B cell (primary cell): ENCODE measurements at regions of chr16 and their contacts with region 1.

Region 1: GRCh38 chr16:30698139-30698815 is 694 bp upstream of the SRCAP start:
- DNase-seq: peak; percentile 99
- ATAC-seq: peak; percentile 75
- H3K4me3 ChIP-seq: peak overlapping the region in 4 of 5 experiments; percentile 95 to 100 (median 97)
- H3K4me3 Mint-ChIP-seq: peak overlapping the region; percentile 95
- H3K27ac ChIP-seq: peak overlapping the region; percentile 100
- H3K27ac Mint-ChIP-seq: peak overlapping the region; percentile 100
- H3K4me1 ChIP-seq: peaks cover 19 to 25% of the 10 kb centered on the region in 2 donors
- H3K4me1 Mint-ChIP-seq: peaks cover 29% of the 10 kb centered on the region
- H3K27me3 ChIP-seq: no peaks in the 10 kb centered on the region
- H3K27me3 Mint-ChIP-seq: no peaks in the 10 kb centered on the region
- CTCF ChIP-seq: no peak

Region 2: DNA sequence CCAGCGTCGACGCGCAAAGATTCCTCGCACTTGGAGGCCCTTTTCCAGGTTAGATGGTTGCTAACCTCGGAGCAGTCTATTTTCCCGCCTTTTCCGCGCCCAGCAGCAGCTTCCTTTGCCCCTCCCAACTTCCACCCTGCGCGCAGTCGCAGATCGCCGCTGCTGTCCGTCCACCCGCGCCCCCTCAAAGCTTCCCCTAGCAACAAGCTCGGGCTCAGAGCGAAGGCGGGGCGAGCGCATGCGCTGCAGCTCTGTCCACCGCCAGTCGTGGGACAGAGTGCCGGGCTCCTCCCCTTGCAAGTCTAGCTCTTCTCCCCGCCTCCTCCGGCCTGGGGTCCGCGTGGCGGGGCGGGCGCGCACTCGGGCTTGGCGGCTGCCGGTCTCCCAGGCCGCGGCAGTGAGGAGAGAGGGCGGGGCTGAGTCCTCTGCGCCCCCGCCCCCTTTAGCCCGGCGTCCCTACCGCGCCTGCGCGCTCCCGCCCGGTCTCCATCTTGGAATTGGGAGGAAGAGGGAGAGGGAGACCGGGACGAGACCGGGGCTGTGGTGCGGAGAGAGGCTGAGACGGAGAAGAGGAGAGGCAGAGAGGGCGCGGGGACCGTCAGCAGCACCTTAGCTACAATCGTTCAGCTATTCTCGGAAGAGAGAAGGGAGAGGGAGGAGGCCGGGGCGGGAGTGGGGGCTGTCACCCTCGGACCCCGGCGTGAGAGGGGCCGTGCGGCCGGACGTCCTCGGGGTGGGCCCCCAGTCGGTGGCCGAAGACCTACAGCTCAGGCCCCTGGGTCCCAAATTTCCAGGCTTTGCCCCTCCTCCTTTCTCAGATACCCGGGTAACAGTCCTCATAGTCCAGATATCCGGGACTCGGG is 724.7 kb before region 1 on chr16 and contains the start of gene TAOK2:
- CTCF ChIA-PET with region 1: no interaction called
- POLR2A ChIA-PET with region 1: no interaction called
- intact Hi-C with region 1: loop called (anchors 5 kb)
- DNase-seq: peak; percentile 98
- ATAC-seq: peak; percentile 99
- H3K4me3 ChIP-seq: peak within 1 kb of the TSS; percentile 79 to 100 (median 99)
- H3K4me3 Mint-ChIP-seq: peak within 1 kb of the TSS; percentile 95
- H3K27ac ChIP-seq: peak within 1 kb of the TSS; percentile 73 to 79
- H3K27ac Mint-ChIP-seq: peak within 1 kb of the TSS; percentile 94
- H3K4me1 ChIP-seq: peaks cover 31 to 38% of the 10 kb centered on the region in 2 donors
- H3K4me1 Mint-ChIP-seq: peaks cover 36% of the 10 kb centered on the region
- H3K27me3 ChIP-seq: no peaks in the 10 kb centered on the region
- H3K27me3 Mint-ChIP-seq: no peaks in the 10 kb centered on the region
- CTCF ChIP-seq: no peak
- total RNA-seq, gene TAOK2: 50.8 and 51.9 TPM in 2 replicates

Region 3: GRCh38 chr16:30417529-30418349 is 280.5 kb before region 1 on chr16:
- CTCF ChIA-PET with region 1: no interaction called
- POLR2A ChIA-PET with region 1: no interaction called
- intact Hi-C with region 1: loop called (anchors 5 kb)
- DNase-seq: peak; percentile 95
- ATAC-seq: peak; percentile 87
- H3K4me3 ChIP-seq: peak overlapping the region; percentile 33 to 75 (median 66)
- H3K4me3 Mint-ChIP-seq: peak overlapping the region; percentile 77
- H3K27ac ChIP-seq: peak overlapping the region; percentile 47 to 73
- H3K27ac Mint-ChIP-seq: peak overlapping the region; percentile 72
- H3K4me1 ChIP-seq: peaks cover 5 to 12% of the 10 kb centered on the region in 2 donors
- H3K4me1 Mint-ChIP-seq: peaks cover 7% of the 10 kb centered on the region
- H3K27me3 ChIP-seq: no peaks in the 10 kb centered on the region
- H3K27me3 Mint-ChIP-seq: no peaks in the 10 kb centered on the region
- CTCF ChIP-seq: peak; percentile 17

Region 4: DNA sequence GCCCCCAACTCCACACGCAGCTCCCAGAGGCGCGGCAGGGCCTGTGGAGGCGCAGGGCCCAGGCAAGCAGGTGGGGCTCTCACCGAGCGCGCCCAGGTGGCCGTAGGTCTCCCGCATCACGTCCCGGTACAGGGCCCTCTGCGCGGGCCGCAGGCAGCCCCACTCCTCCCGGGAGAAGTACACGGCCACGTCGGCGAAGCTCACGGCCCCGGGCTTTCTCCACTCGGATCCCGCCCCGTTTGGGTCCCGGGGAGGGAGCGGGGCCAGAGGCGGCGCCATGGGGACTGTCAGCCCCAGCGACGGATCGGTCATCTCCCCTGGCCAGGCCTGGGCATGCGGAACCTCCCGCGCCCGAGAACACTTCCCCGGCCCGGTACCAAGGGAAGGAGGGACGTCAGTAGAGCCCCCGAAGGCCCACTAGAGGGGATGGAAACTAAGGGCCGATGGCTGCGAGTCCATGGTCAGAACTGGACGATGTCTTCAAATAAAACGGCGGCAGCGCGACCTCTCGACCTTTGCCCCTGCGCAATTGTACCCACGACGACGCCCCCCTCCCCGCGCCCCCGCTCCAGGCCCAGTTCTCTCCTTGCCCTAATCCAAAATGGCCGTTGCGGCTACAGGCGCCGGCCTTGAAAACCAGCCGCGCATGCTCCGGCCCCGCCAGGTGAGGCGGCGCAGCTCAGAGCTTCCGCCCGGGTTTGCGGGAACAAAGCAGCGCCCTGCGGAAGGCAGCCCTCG is 163.7 kb before region 1 on chr16 and contains the start of gene ZNF747:
- CTCF ChIA-PET with region 1: interaction called, 3 read pairs
- POLR2A ChIA-PET with region 1: interaction called, 4 read pairs
- intact Hi-C with region 1: loop called (anchors 1 kb)
- DNase-seq: peak; percentile 93
- ATAC-seq: peak; percentile 82
- H3K4me3 ChIP-seq: peak within 1 kb of the TSS; percentile 80 to 93 (median 88)
- H3K4me3 Mint-ChIP-seq: peak within 1 kb of the TSS; percentile 98
- H3K27ac ChIP-seq: peak within 1 kb of the TSS; percentile 89 to 94
- H3K27ac Mint-ChIP-seq: peak within 1 kb of the TSS; percentile 94
- H3K4me1 ChIP-seq: peaks cover 8 to 23% of the 10 kb centered on the region in 2 donors
- H3K4me1 Mint-ChIP-seq: peaks cover 33% of the 10 kb centered on the region
- H3K27me3 ChIP-seq: no peaks in the 10 kb centered on the region
- H3K27me3 Mint-ChIP-seq: no peaks in the 10 kb centered on the region
- CTCF ChIP-seq: no peak
- total RNA-seq, gene ZNF747: 17.3 and 27.1 TPM in 2 replicates

Region 5: GRCh38 chr16:30650369-30651123 is 47.7 kb before region 1 on chr16 and contains the start of gene PRR14:
- CTCF ChIA-PET with region 1: interaction called, 17 read pairs
- POLR2A ChIA-PET with region 1: interaction called, 8 read pairs
- intact Hi-C with region 1: loop called (anchors 1 kb)
- DNase-seq: peak; percentile 99
- ATAC-seq: peak; percentile 76
- H3K4me3 ChIP-seq: peak within 1 kb of the TSS; percentile 62 to 100 (median 93)
- H3K4me3 Mint-ChIP-seq: peak within 1 kb of the TSS; percentile 91
- H3K27ac ChIP-seq: peak within 1 kb of the TSS; percentile 97 to 98
- H3K27ac Mint-ChIP-seq: peak within 1 kb of the TSS; percentile 96
- H3K4me1 ChIP-seq: peaks cover 9 to 21% of the 10 kb centered on the region in 2 donors
- H3K4me1 Mint-ChIP-seq: peaks cover 19% of the 10 kb centered on the region
- H3K27me3 ChIP-seq: no peaks in the 10 kb centered on the region
- H3K27me3 Mint-ChIP-seq: no peaks in the 10 kb centered on the region
- CTCF ChIP-seq: no peak
- total RNA-seq, gene PRR14: 92.7 and 95.8 TPM in 2 replicates

Region 6: DNA sequence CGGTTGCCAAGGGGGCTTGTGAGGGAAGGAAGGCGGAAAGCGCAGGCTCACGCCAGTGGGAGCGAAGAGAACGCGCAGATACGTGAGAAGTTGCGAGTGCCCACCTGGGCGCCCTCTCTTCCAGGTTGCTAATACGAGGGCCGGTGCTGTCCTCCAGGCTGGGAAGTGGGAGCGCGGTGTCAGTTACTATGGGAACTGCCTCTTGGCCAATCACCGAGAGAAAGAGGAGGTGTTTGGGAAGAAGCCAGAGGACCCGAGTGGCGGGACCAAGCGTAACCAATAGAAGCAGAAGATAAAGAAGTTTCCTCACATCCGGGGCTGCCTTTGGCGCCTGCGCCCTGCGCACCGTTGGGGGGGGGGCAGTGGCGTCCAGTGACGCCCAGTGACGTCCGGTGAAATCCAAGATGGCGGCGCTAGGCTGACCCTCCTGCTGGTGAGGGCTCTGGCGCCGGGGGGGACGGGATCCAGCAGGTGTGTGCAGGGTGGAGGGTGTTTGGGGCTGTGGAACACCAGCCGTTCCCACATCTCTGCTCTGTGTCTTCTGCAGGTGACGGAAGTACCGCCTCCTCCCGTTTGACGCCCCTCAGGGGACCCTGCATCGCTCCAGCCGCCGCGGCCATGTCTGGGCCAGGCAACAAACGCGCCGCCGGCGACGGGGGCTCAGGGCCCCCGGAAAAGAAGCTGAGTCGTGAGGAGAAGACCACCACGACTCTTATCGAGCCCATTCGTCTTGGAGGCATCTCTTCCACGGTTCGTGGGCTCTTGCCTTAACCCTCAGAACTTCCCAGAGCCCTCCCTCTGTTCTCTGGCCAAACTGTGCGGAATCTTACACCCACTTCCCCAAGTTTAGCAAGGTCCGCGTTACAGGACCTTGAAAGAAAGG is 63.9 kb after region 1 on chr16 and contains the starts of genes CFAP119 and RNF40:
- CTCF ChIA-PET with region 1: interaction called, 3 read pairs
- POLR2A ChIA-PET with region 1: interaction called, 10 read pairs
- intact Hi-C with region 1: loop called (anchors 1 kb)
- DNase-seq: peak; percentile 95
- ATAC-seq: peak; percentile 92
- H3K4me3 ChIP-seq: peak within 1 kb of the TSS; percentile 82 to 93 (median 90)
- H3K4me3 Mint-ChIP-seq: peak within 1 kb of the TSS; percentile 98
- H3K27ac ChIP-seq: peak within 1 kb of the TSS; percentile 57 to 91
- H3K27ac Mint-ChIP-seq: peak within 1 kb of the TSS; percentile 95
- H3K4me1 ChIP-seq: peaks cover 24 to 37% of the 10 kb centered on the region in 2 donors
- H3K4me1 Mint-ChIP-seq: peaks cover 36% of the 10 kb centered on the region
- H3K27me3 ChIP-seq: no peaks in the 10 kb centered on the region
- H3K27me3 Mint-ChIP-seq: no peaks in the 10 kb centered on the region
- CTCF ChIP-seq: no peak
- total RNA-seq, gene CFAP119: 9.3 and 11.7 TPM in 2 replicates
- total RNA-seq, gene RNF40: 120 and 121 TPM in 2 replicates